ENCODE measurements at regions of chr2 and their contacts with region 1.

Region 1: GRCh38 chr2:10659898-10660568 is 29.7 kb downstream of the NOL10 start:
- DNase-seq: peak; percentile 82 to 94 (median 90)
- H3K4me3 ChIP-seq: no peak overlapping the region
- H3K27ac ChIP-seq: peak overlapping the region in 1 of 5 donors; percentile 5
- H3K4me1 ChIP-seq: no peaks in the 10 kb centered on the region
- H3K27me3 ChIP-seq: no peaks in the 10 kb centered on the region
- CTCF ChIP-seq: peak; percentile 75 to 95 (median 86)
- POLR2A ChIP-seq: no peak

Region 2: DNA sequence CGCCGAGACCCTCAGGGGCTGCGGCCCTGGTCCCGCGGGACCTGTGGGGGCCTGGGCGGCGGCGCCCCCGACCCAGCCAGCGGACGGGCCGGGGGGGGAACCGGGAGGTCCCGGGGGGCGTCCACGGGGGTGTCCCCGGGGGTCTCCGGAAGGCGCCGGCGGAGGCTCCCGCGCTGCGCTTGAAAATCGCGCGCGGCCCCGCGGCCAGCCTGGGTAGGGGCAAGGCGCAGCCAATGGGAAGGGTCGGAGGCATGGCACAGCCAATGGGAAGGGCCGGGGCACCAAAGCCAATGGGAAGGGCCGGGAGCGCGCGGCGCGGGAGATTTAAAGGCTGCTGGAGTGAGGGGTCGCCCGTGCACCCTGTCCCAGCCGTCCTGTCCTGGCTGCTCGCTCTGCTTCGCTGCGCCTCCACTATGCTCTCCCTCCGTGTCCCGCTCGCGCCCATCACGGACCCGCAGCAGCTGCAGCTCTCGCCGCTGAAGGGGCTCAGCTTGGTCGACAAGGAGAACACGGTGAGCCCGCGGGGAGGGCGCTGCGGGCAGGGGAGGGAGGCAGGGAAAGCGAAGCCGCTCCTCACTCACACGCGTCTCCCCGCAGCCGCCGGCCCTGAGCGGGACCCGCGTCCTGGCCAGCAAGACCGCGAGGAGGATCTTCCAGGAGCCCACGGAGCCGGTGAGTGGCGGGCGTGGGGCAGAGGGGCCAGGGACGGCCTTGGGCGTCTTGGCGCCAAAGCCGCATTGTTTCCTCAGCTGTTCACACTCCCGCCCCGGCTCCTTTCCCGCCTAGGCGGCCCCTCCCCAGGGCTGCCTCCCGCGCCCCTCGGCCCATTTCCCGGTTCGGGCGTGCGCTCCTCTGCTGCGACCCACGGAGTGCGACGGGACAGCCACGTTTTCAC is 537.4 kb before region 1 on chr2 and contains the start of gene RRM2:
- intact Hi-C with region 1: loop called in 1 of 2 experiments (anchors 10 kb)
- DNase-seq: peak; percentile 91 to 95 (median 94)
- H3K4me3 ChIP-seq: peak within 1 kb of the TSS in 2 of 4 donors; percentile 24 to 59
- H3K27ac ChIP-seq: no peak within 1 kb of the TSS
- H3K4me1 ChIP-seq: peaks cover 6 to 25% of the 10 kb centered on the region in 2 donors
- H3K27me3 ChIP-seq: peaks cover 11% of the 10 kb centered on the region
- CTCF ChIP-seq: no peak
- POLR2A ChIP-seq: no peak
- total RNA-seq, gene RRM2: 2.0 to 22.3 (median 4.0) TPM

Region 3: DNA sequence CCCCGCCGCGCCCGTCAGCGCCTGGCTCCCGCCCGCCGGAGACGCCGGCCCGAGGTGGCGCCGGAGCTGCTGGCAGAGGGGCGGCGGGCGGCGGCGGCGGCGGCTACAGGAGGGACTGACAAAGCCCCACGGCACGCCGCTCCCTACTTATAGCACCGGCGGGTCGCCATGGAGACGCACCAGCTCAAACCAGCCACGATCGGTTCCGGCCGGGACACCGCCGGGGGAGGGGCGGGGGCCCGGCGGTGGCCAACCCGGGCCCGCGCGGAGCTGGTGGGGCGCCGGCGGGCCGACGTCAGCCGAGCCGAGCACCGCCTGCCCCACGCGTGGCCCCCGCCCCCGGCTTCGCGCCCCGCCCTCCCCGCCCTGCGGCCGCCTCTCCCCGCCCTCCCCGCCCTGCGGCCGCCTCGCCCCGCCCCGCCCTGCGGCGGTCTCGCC is 211.8 kb before region 1 on chr2 and contains the start of gene ODC1:
- intact Hi-C with region 1: loop called in 1 of 2 experiments (anchors 10 kb)
- DNase-seq: peak; percentile 92 to 96 (median 95)
- H3K4me3 ChIP-seq: peak within 1 kb of the TSS in 3 of 4 donors; percentile 16 to 68 (median 60)
- H3K27ac ChIP-seq: peak within 1 kb of the TSS; percentile 69 to 96 (median 85)
- H3K4me1 ChIP-seq: peaks cover 9 to 26% of the 10 kb centered on the region in 2 donors
- H3K27me3 ChIP-seq: no peaks in the 10 kb centered on the region
- CTCF ChIP-seq: peak in 1 of 6 experiments; percentile 19
- POLR2A ChIP-seq: peak; percentile 59 to 78
- total RNA-seq, gene ODC1: 11.0 to 74.0 (median 25.0) TPM

Region 4: GRCh38 chr2:10762651-10763465 is 102.8 kb after region 1 on chr2:
- intact Hi-C with region 1: no loop called
- DNase-seq: no peak
- H3K4me3 ChIP-seq: no peak overlapping the region
- H3K27ac ChIP-seq: no peak overlapping the region
- H3K4me1 ChIP-seq: no peaks in the 10 kb centered on the region
- H3K27me3 ChIP-seq: no peaks in the 10 kb centered on the region
- CTCF ChIP-seq: no peak
- POLR2A ChIP-seq: no peak

Region 5: DNA sequence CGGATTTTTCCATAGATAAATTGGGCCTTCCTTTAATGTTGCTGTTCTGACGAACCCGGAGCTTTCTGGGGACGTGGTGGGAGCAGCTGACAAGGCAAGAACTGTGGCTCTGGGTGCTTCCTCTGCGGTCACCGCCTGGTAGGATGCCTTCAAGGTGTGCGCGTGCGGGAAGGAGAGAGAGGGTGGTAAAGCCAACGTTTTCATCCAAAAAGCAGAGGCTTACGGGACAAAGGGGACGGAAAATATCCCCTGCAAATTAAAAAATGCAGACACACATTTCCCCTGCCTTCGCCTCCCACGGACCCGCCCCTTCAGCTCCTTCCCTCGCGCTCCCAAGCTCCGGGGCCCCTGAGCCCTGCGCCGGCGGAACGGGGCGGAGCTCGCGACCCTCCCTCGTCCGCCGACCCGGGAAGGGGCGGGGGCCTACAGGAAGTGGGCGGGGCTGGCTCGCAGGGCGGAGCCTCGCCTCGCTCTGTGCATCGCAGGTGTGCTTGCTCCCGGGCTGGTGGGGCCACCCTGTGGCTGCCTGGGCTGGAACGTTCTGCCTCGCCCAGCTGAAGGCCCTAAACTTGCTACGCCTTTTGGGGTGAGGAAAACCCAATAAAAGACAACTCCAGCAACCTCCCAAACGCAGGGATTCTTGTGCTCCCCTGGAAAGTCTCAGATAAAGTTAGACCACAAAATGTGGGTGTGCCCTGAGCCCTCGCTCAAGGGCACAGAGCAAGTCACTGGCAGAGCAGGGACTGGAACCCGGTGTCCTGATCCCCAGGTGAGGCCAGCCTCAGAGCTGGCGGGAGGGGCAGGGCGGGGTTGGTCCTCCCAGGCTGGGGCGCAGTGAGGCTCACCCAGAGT is 469.8 kb after region 1 on chr2:
- intact Hi-C with region 1: no loop called
- DNase-seq: peak in 4 of 7 donors; percentile 44 to 50 (median 48)
- H3K4me3 ChIP-seq: peak overlapping the region in 2 of 4 donors; percentile 6 to 54
- H3K27ac ChIP-seq: peak overlapping the region in 2 of 5 donors; percentile 7 to 21
- H3K4me1 ChIP-seq: peaks cover 16 to 19% of the 10 kb centered on the region in 2 donors
- H3K27me3 ChIP-seq: no peaks in the 10 kb centered on the region
- CTCF ChIP-seq: peak in 3 of 6 experiments; percentile 11 to 35 (median 17)
- POLR2A ChIP-seq: no peak

Measured in adrenal gland (tissue), 19 donors.